Heart left ventricle (tissue), 16 donors: ENCODE measurements at regions of chr21 and their contacts with region 1.

Region 1: DNA sequence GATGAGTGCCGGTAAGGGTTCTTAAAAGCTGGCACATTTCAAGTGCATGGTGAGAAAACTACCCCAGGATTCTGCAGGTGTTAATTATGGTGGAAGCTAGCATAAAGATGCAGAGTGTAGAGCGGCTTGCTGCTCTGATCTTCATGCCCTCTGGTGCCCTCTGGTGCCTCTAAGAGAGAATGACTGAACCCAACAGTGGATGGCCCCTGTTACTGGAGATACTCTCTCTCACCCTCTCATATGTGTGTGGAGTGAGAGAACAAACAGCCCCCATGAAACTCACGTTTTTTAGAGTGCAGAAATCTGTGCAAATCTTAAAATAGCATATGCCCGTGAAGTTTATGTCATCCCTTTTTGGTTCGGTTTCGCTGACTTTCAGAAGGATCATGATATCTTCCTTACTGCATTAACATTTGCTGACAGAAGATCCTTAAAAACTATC is 90.0 kb downstream of the GRIK1 start:
- DNase-seq: peak in 4 of 5 donors; percentile 19 to 34 (median 30)
- ATAC-seq: peak in 3 of 4 donors; percentile 74 to 90 (median 86)
- H3K4me3 ChIP-seq: no peak overlapping the region
- H3K27ac ChIP-seq: no peak overlapping the region
- H3K4me1 ChIP-seq: no peaks in the 10 kb centered on the region
- H3K27me3 ChIP-seq: peaks cover 0 to 5% (median 0%) of the 10 kb centered on the region in 9 donors
- CTCF ChIP-seq: peak; percentile 45 to 84 (median 67)
- POLR2A ChIP-seq: no peak

Region 2: GRCh38 chr21:29351691-29352090 is 498.1 kb before region 1 on chr21:
- intact Hi-C with region 1: loop called in 1 of 10 experiments (anchors 10 kb)
- DNase-seq: no peak
- ATAC-seq: peak in 3 of 4 donors; percentile 32 to 37 (median 34)
- H3K4me3 ChIP-seq: no peak overlapping the region
- H3K27ac ChIP-seq: peak overlapping the region in 1 of 12 donors; percentile 32
- H3K4me1 ChIP-seq: peaks cover 0 to 32% (median 6%) of the 10 kb centered on the region in 12 donors
- H3K27me3 ChIP-seq: no peaks in the 10 kb centered on the region
- CTCF ChIP-seq: no peak
- POLR2A ChIP-seq: no peak

Region 3: GRCh38 chr21:29477941-29478340 is 371.8 kb before region 1 on chr21:
- intact Hi-C with region 1: loop called in 9 of 10 experiments (anchors 1 to 5 kb)
- DNase-seq: no peak
- ATAC-seq: no peak
- H3K4me3 ChIP-seq: no peak overlapping the region
- H3K27ac ChIP-seq: no peak overlapping the region
- H3K4me1 ChIP-seq: peaks cover 0 to 8% (median 0%) of the 10 kb centered on the region in 12 donors
- H3K27me3 ChIP-seq: no peaks in the 10 kb centered on the region
- CTCF ChIP-seq: no peak
- POLR2A ChIP-seq: no peak

Region 4: GRCh38 chr21:29885491-29885890 is 35.7 kb after region 1 on chr21:
- intact Hi-C with region 1: no loop called
- DNase-seq: no peak
- ATAC-seq: no peak
- H3K4me3 ChIP-seq: no peak overlapping the region
- H3K27ac ChIP-seq: no peak overlapping the region
- H3K4me1 ChIP-seq: no peaks in the 10 kb centered on the region
- H3K27me3 ChIP-seq: no peaks in the 10 kb centered on the region
- CTCF ChIP-seq: no peak
- POLR2A ChIP-seq: no peak

Region 5: GRCh38 chr21:29896884-29897283 is 47.1 kb after region 1 on chr21:
- intact Hi-C with region 1: no loop called
- DNase-seq: no peak
- ATAC-seq: no peak
- H3K4me3 ChIP-seq: no peak overlapping the region
- H3K27ac ChIP-seq: no peak overlapping the region
- H3K4me1 ChIP-seq: no peaks in the 10 kb centered on the region
- H3K27me3 ChIP-seq: peaks cover 0 to 5% (median 0%) of the 10 kb centered on the region in 9 donors
- CTCF ChIP-seq: no peak
- POLR2A ChIP-seq: no peak